ENCODE measurements at regions of chr6 and their contacts with region 1.

Region 1: GRCh38 chr6:144349690-144350527 is 64.8 kb downstream of the UTRN start:
- DNase-seq: no peak
- H3K4me3 Mint-ChIP-seq: peak overlapping the region; percentile 83
- H3K27ac Mint-ChIP-seq: peak overlapping the region; percentile 94
- H3K4me1 Mint-ChIP-seq: peaks cover 89% of the 10 kb centered on the region
- H3K27me3 Mint-ChIP-seq: no peaks in the 10 kb centered on the region

Region 2: GRCh38 chr6:143806282-143807102 is 543.4 kb before region 1 on chr6:
- intact Hi-C with region 1: loop called (anchors 10 kb)
- DNase-seq: peak; percentile 48
- H3K4me3 Mint-ChIP-seq: peak overlapping the region; percentile 56
- H3K27ac Mint-ChIP-seq: peak overlapping the region; percentile 94
- H3K4me1 Mint-ChIP-seq: peaks cover 55% of the 10 kb centered on the region
- H3K27me3 Mint-ChIP-seq: peaks cover 3% of the 10 kb centered on the region

Region 3: GRCh38 chr6:144284783-144285547 is 64.9 kb before region 1 on chr6 and contains the start of gene UTRN:
- intact Hi-C with region 1: loop called (anchors 1 kb)
- DNase-seq: peak; percentile 29
- H3K4me3 Mint-ChIP-seq: peak within 1 kb of the TSS; percentile 93
- H3K27ac Mint-ChIP-seq: peak within 1 kb of the TSS; percentile 64
- H3K4me1 Mint-ChIP-seq: peaks cover 19% of the 10 kb centered on the region
- H3K27me3 Mint-ChIP-seq: peaks cover 33% of the 10 kb centered on the region
- total RNA-seq, gene UTRN: 48.3 and 50.6 TPM in 2 replicates

Region 4: GRCh38 chr6:144362042-144363018 is 12.4 kb after region 1 on chr6:
- intact Hi-C with region 1: loop called (anchors 1 kb)
- DNase-seq: no peak
- H3K4me3 Mint-ChIP-seq: no peak overlapping the region
- H3K27ac Mint-ChIP-seq: no peak overlapping the region
- H3K4me1 Mint-ChIP-seq: peaks cover 59% of the 10 kb centered on the region
- H3K27me3 Mint-ChIP-seq: no peaks in the 10 kb centered on the region

Region 5: GRCh38 chr6:144469144-144469575 is 119.3 kb after region 1 on chr6:
- intact Hi-C with region 1: loop called (anchors 2 kb)
- DNase-seq: no peak
- H3K4me3 Mint-ChIP-seq: peak overlapping the region; percentile 54
- H3K27ac Mint-ChIP-seq: peak overlapping the region; percentile 86
- H3K4me1 Mint-ChIP-seq: peaks cover 27% of the 10 kb centered on the region
- H3K27me3 Mint-ChIP-seq: no peaks in the 10 kb centered on the region

Region 6: DNA sequence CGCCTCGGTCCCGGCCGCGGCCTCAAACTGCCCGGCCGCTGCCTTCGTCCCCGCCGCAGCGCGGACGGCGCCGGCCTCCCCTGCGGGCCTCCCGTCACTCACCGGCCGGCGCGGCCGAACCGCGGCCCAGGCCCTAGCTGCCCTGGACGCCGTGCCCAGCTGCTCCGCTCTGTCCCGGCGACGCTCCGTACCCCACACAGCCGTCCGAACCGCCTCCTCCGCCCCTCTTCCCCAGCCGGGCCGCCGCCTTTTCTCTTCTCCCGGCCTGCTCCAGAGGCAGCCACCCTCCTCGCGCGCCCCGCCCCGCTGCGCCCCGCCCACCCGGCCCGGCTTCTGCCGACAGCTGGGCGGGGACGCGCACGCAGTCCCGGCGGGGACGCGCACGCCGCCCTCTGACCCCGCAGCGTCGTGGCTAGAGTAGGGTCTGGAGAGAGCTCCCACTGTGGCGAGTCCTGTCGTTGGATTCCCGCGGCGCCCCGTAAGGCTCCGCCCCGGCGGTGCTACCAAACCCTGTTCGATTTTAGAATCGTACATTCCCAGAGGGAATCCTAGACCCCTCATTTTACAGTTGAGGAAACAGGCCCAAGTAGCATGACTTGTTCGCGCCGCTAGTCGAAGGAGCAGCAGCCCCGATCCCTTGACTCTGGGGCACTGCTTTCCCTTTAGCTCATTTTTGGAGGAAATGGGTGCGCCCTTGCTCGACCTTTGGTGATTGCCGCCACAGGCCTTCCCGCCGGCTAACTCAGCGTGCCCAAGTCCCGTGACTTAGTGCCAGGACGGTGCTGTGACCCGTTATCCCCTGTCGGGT is 1464.8 kb after region 1 on chr6 and contains the start of gene FBXO30:
- intact Hi-C with region 1: loop called (anchors 10 kb)
- DNase-seq: peak; percentile 83
- H3K4me3 Mint-ChIP-seq: peak within 1 kb of the TSS; percentile 90
- H3K27ac Mint-ChIP-seq: peak within 1 kb of the TSS; percentile 89
- H3K4me1 Mint-ChIP-seq: peaks cover 61% of the 10 kb centered on the region
- H3K27me3 Mint-ChIP-seq: no peaks in the 10 kb centered on the region
- total RNA-seq, gene FBXO30: 8.8 TPM in 2 replicates

Measured in activated T-helper 1 cell treated with anti-CD3 and anti-CD28 coated beads, Interleukin-12 subunit alpha, Interleukin-12 subunit beta, Interleukin-2, Interleukin-4 antibody, amounts not matched to agents 30 ng/mL and 10 ng/mL and 1 ng/mL, durations not matched to agents 14 hours and 24 hours and 36 hours (primary cell).